ENCODE measurements at regions of chr11 and their contacts with region 1.

Region 1: DNA sequence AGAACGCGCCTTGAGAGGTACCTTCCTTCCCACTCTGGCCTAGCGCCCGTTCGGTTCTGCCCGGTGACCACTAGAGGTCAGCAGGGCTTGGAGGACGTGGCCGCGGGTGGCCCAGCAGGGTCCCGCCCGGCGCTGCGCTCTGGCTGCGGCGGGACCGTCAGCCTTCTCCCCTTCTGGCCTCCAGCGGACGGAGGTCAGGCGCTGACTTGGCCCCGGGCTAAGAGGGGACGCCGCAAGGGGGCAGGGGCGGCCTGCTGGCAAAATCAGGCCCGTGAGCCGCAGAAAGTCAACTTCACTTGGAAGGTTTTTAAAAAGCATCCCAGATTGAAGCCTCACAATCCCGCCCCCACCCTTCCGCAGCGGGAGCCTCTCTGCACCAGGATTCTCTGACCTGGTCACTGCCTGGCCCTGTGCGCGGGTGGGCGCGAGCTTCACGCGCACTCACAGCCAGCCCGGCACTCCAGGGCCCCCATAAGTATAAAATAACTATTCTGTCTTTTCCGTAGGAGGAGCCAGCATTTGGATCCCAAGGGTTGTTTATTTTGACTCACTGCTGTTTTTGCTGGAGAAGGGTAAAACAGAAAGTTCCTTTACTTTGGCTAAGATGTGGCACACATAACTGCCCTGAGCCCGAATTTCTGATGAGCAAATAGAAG is 23.2 kb upstream of the ZBTB16 start:
- DNase-seq: peak; percentile 18
- ATAC-seq: peak; percentile 95
- H3K4me3 ChIP-seq: peak overlapping the region; percentile 5; the same call in 1 of the 2 replicates
- H3K27ac ChIP-seq: no peak overlapping the region
- H3K4me1 ChIP-seq: no peaks in the 10 kb centered on the region
- H3K27me3 ChIP-seq: peaks cover 10% of the 10 kb centered on the region; the same call in 1 of the 2 replicates
- CTCF ChIP-seq: peak; percentile 61
- POLR2A ChIP-seq: no peak
- RAD21 ChIP-seq: peak; percentile 59

Region 2: DNA sequence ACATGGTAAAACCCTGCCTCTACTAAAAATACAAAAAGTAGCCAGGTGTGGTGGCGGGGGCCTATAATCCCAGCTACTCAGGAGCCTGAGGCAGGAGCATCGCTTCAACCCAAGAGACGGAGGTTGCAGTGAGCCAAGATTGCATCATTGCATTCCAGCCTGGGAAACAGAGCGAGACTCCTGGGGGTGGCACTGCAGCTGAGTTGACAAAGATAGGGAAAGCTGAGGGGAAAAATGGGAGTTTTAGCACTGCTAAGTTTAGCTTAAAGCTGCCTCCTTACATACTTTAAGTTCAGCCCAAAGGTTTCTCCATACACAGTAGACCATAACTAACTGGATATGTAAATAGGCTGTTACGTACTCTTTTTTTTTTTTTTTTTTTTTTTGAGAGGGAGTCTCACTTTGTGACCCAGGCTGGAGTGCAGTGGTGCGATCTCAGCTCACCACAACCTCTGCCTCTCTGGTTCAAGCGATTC is 151.9 kb before region 1 on chr11:
- CTCF ChIA-PET with region 1: no interaction called
- POLR2A ChIA-PET with region 1: no interaction called
- dilution Hi-C with region 1: no loop called
- in situ Hi-C with region 1: no loop called
- intact Hi-C with region 1: no loop called
- DNase-seq: peak; percentile 44
- ATAC-seq: peak; percentile 83
- H3K4me3 ChIP-seq: no peak overlapping the region
- H3K27ac ChIP-seq: no peak overlapping the region
- H3K4me1 ChIP-seq: no peaks in the 10 kb centered on the region
- H3K27me3 ChIP-seq: no peaks in the 10 kb centered on the region
- CTCF ChIP-seq: no peak
- POLR2A ChIP-seq: no peak
- RAD21 ChIP-seq: no peak

Region 3: GRCh38 chr11:113896156-113896879 is 140.0 kb before region 1 on chr11:
- CTCF ChIA-PET with region 1: interaction called, 3 read pairs
- POLR2A ChIA-PET with region 1: no interaction called
- dilution Hi-C with region 1: no loop called
- in situ Hi-C with region 1: no loop called
- intact Hi-C with region 1: loop called (anchors 5 kb)
- DNase-seq: peak; percentile 22
- ATAC-seq: peak; percentile 88
- H3K4me3 ChIP-seq: no peak overlapping the region
- H3K27ac ChIP-seq: no peak overlapping the region
- H3K4me1 ChIP-seq: no peaks in the 10 kb centered on the region
- H3K27me3 ChIP-seq: peaks cover 9% of the 10 kb centered on the region
- CTCF ChIP-seq: peak; percentile 70
- POLR2A ChIP-seq: no peak
- RAD21 ChIP-seq: peak; percentile 50

Region 4: GRCh38 chr11:113952588-113952987 is 83.7 kb before region 1 on chr11:
- CTCF ChIA-PET with region 1: no interaction called
- POLR2A ChIA-PET with region 1: no interaction called
- dilution Hi-C with region 1: no loop called
- in situ Hi-C with region 1: no loop called
- intact Hi-C with region 1: no loop called
- DNase-seq: no peak
- ATAC-seq: no peak
- H3K4me3 ChIP-seq: no peak overlapping the region
- H3K27ac ChIP-seq: no peak overlapping the region
- H3K4me1 ChIP-seq: no peaks in the 10 kb centered on the region
- H3K27me3 ChIP-seq: peaks cover 4% of the 10 kb centered on the region; the same call in 1 of the 2 replicates
- CTCF ChIP-seq: no peak
- POLR2A ChIP-seq: no peak
- RAD21 ChIP-seq: no peak

Region 5: GRCh38 chr11:114017723-114018122 is 18.6 kb before region 1 on chr11:
- CTCF ChIA-PET with region 1: no interaction called
- POLR2A ChIA-PET with region 1: no interaction called
- dilution Hi-C with region 1: no loop called
- in situ Hi-C with region 1: no loop called
- intact Hi-C with region 1: no loop called
- DNase-seq: no peak
- ATAC-seq: no peak
- H3K4me3 ChIP-seq: no peak overlapping the region
- H3K27ac ChIP-seq: no peak overlapping the region
- H3K4me1 ChIP-seq: no peaks in the 10 kb centered on the region
- H3K27me3 ChIP-seq: no peaks in the 10 kb centered on the region
- CTCF ChIP-seq: no peak
- POLR2A ChIP-seq: no peak
- RAD21 ChIP-seq: no peak

Region 6: DNA sequence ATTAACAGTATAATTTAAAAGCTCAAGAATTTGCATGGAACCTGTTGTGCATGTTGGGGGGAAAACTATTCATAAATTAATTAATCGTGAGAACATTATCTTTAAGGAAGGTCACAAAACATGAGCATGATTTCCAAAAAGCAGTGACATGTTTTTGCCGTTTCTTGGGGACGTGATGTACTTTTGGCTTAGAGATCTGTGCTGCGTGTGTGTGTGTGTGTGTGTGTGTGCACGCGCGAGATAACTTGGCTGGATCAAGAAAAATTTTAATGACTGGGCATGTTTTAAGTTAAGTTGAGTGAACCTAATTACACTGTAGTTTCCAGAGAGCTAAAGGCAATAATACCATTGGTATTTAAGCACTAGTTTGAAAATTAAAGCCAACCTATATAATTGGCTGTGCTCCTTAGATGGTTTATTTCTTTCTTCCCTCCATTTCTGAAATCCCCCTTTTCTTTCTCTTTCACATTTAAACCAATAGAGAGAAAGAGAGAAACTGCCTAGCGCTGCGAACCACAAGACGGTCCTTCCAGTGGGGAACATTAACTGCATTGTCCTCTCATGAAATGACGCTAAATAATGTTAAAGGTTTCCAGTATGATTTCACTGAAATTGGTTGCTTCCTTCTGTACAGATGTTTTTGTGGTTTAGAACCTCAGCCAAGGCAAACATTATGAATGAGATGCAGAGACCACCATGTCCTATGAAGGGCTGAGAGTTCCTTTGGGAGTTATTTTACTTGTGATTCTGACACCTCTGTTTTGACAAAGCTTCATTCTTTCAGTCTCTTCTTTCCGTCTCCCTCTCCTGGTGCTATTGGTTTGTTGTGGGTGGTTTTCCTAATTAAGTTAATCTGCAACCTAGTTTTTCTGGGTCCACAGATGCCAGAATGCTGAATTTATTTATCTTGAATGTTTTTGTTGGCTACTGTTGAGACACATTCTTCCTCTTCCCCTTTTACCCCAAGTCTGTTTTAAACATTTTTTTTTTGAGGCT is 75.0 kb after region 1 on chr11:
- CTCF ChIA-PET with region 1: no interaction called
- POLR2A ChIA-PET with region 1: no interaction called
- dilution Hi-C with region 1: no loop called
- in situ Hi-C with region 1: no loop called
- intact Hi-C with region 1: no loop called
- DNase-seq: no peak
- ATAC-seq: no peak
- H3K4me3 ChIP-seq: no peak overlapping the region
- H3K27ac ChIP-seq: no peak overlapping the region
- H3K4me1 ChIP-seq: no peaks in the 10 kb centered on the region
- H3K27me3 ChIP-seq: peaks cover 8% of the 10 kb centered on the region
- CTCF ChIP-seq: no peak
- POLR2A ChIP-seq: no peak
- RAD21 ChIP-seq: no peak

Region 7: DNA sequence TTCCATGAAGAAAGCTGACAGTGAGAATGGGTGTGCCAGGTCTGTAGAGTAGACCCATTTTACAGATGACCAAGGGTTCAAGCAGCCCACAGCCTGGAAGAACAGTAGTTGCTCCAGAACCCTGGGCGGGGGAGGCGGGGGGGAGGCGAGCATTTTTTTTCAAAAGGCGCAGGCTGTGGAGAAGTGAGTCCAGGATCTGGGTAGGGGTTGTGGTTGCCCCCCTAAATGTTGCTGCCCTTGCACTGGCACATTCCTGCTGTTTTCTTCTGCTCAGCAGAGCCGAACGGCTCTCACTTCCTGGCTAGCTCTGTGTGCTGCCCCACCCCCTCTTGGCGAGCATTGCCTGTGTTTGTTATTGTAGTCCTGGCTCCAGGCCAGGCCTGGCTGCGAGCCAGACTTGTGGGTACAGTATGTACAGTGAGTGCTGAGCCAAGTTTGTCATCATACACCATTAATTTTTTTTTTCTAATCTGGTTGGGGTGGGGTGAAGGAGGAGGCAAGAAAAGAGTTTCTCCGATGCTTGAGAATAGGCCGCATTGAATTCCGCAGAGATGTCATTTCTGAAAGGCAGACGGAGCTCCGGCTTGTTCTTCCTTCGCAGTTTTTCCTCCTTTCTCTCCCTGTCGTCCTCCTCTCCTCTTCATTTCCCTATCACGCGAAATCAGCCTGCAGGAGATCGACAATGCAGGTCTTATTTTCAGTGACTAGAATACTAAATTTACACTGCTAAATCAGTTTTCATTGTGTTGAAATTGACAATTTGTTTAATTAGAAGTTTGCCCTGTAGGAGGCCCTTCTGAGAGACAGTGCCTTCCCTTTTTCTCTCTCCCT is 123.7 kb after region 1 on chr11:
- CTCF ChIA-PET with region 1: no interaction called
- POLR2A ChIA-PET with region 1: no interaction called
- dilution Hi-C with region 1: no loop called
- in situ Hi-C with region 1: no loop called
- intact Hi-C with region 1: loop called (anchors 5 kb)
- DNase-seq: peak; percentile 90
- ATAC-seq: peak; percentile 73
- H3K4me3 ChIP-seq: no peak overlapping the region
- H3K27ac ChIP-seq: peak overlapping the region; percentile 31; the same call in 1 of the 2 replicates
- H3K4me1 ChIP-seq: peaks cover 16% of the 10 kb centered on the region; the same call in 1 of the 2 replicates
- H3K27me3 ChIP-seq: peaks cover 50% of the 10 kb centered on the region
- CTCF ChIP-seq: no peak
- POLR2A ChIP-seq: no peak
- RAD21 ChIP-seq: no peak; the same call in none of the 2 replicates

Region 8: GRCh38 chr11:114179234-114179941 is 143.1 kb after region 1 on chr11:
- CTCF ChIA-PET with region 1: no interaction called
- POLR2A ChIA-PET with region 1: no interaction called
- dilution Hi-C with region 1: no loop called
- in situ Hi-C with region 1: no loop called
- intact Hi-C with region 1: loop called (anchors 5 kb)
- DNase-seq: no peak
- ATAC-seq: no peak
- H3K4me3 ChIP-seq: no peak overlapping the region
- H3K27ac ChIP-seq: no peak overlapping the region
- H3K4me1 ChIP-seq: no peaks in the 10 kb centered on the region; the same call in 1 of the 2 replicates
- H3K27me3 ChIP-seq: peaks cover 60% of the 10 kb centered on the region
- CTCF ChIP-seq: no peak
- POLR2A ChIP-seq: no peak
- RAD21 ChIP-seq: no peak